Breast epithelium (tissue), 4 donors: ENCODE measurements at regions of chr19 and their contacts with region 1.

Region 1: DNA sequence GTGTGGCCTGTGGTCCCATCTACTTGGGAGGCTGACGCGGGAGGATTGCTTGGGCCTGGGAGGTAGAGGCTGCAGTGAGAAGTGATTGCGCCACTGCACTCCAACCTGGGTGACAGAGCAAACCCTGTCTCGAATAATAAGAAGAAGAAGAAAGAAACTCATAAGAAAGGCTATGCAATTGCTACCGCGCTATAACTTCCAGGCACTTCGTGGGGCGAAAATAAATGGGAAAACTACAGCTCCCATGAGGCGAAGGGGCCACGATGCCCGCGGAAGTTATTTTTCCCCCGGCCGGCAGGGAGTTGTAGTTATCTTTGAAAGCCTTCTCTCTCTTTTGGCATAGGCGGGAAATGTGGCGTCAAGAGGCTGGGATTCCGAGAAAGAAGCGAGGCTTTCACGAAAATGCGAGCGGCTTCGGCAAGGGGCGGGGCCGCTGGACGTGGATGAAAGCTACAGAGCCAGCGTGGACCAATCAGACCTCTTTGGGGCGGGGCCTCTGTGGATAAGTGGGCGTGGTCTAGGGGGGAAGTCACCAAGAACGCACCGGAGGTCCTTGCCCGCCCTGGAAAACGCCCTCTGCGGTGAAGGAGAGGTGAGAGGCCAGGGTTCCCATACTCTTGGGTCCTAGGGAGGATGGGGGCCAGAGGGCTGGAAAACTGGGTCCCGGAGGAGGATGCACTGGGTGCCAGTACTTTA is at the start of gene NUCB1:
- DNase-seq: peak; percentile 99
- H3K4me3 ChIP-seq: peak within 1 kb of the TSS; percentile 75 to 83 (median 76)
- H3K27ac ChIP-seq: peak within 1 kb of the TSS; percentile 87 to 89
- H3K4me1 ChIP-seq: peaks cover 5 to 17% of the 10 kb centered on the region in 2 donors
- H3K27me3 ChIP-seq: no peaks in the 10 kb centered on the region
- CTCF ChIP-seq: peak in 2 of 3 donors; percentile 41 to 42
- POLR2A ChIP-seq: peak; percentile 17
- total RNA-seq, gene NUCB1: 131 to 333 (median 223) TPM

Region 2: DNA sequence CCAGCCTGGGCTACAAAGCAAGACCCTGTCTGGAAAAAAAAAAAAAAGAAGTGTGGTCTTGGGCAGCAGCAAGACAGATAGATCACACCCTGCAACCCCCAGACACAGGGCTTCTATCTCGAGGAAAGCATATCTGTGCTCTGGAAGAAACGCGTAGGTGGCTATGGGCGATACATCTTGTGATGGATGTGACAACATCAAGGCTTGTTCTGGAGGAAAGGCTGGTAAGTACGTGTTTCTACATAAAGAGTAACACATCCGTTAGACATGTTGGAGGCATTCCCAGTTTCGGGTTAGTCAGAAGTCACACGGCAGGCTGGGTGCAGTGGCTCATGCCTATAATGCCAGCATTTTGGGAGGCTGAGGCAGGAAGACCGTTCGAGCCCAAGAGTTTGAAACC is 27.0 kb after region 1 on chr19:
- intact Hi-C with region 1: loop called (anchors 1 kb)
- DNase-seq: peak in 1 of 2 donors; percentile 49
- H3K4me3 ChIP-seq: no peak overlapping the region
- H3K27ac ChIP-seq: no peak overlapping the region
- H3K4me1 ChIP-seq: no peaks in the 10 kb centered on the region
- H3K27me3 ChIP-seq: no peaks in the 10 kb centered on the region
- CTCF ChIP-seq: no peak
- POLR2A ChIP-seq: no peak

Region 3: GRCh38 chr19:48982280-48982679 is 82.4 kb after region 1 on chr19:
- intact Hi-C with region 1: no loop called
- DNase-seq: no peak
- H3K4me3 ChIP-seq: no peak overlapping the region
- H3K27ac ChIP-seq: no peak overlapping the region
- H3K4me1 ChIP-seq: no peaks in the 10 kb centered on the region
- H3K27me3 ChIP-seq: no peaks in the 10 kb centered on the region
- CTCF ChIP-seq: no peak
- POLR2A ChIP-seq: no peak